Kidney (tissue), 22 donors: ENCODE measurements at regions of chr14 and their contacts with region 1.

Region 1: GRCh38 chr14:70707138-70708038 is 65.7 kb downstream of the TTC9 start:
- DNase-seq: peak in 2 of 5 donors; percentile 12 to 70
- H3K4me3 ChIP-seq: no peak overlapping the region
- H3K27ac ChIP-seq: no peak overlapping the region
- H3K4me1 ChIP-seq: no peaks in the 10 kb centered on the region
- H3K27me3 ChIP-seq: no peaks in the 10 kb centered on the region
- CTCF ChIP-seq: no peak

Region 2: DNA sequence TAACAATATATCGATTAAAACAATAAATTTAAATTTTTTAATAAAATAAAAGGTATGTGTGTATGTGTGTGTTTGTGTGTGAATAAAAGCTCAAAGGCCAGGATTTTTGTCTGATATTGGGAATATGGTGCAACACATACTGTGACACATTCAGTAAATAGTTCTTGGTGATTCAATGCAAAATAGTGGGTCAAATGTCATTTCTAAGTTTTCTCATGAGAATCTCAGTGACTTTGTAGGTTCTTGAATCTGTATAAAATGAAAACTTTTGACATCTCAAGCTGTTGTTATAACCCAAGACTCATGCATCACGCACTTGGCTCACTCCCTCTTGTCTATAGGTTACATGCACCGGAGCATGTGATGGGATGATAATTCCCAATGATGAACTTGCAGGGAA is 90.7 kb before region 1 on chr14:
- intact Hi-C with region 1: loop called (anchors 10 kb)
- DNase-seq: no peak
- H3K4me3 ChIP-seq: no peak overlapping the region
- H3K27ac ChIP-seq: no peak overlapping the region
- H3K4me1 ChIP-seq: no peaks in the 10 kb centered on the region
- H3K27me3 ChIP-seq: no peaks in the 10 kb centered on the region
- CTCF ChIP-seq: no peak